ENCODE measurements at regions of chr1 and their contacts with region 1.

Region 1: GRCh38 chr1:241834733-241835377 is 13.1 kb upstream of the EXO1 start:
- DNase-seq: peak in 4 of 42 donors; percentile 13 to 47 (median 24)

Region 2: GRCh38 chr1:241396747-241397681 is 437.8 kb before region 1 on chr1:
- intact Hi-C with region 1: no loop called
- DNase-seq: no peak

Region 3: DNA sequence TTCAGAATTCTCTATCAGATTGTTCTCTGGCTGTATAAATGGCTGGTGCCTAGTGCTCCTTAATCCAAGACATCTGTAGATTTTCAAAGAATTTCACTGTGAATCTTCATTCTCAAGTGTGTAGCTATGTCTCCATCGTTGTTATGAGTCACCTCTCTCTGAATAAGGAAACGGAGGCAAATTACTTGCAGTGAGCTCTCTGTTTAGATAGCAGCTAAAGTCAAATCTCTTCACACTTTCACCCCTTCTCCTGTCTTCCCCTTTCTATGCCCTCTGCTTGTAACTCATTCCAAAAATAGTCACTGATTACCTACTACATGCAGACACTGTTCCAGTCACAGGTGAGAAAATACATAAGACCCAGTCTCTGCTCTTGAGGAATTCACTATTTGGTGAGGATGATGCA is 234.4 kb before region 1 on chr1:
- intact Hi-C with region 1: loop called (anchors 10 kb)
- DNase-seq: no peak

Region 4: GRCh38 chr1:241789061-241789460 is 45.8 kb before region 1 on chr1:
- intact Hi-C with region 1: no loop called
- DNase-seq: no peak